PC-3 (cell line): ENCODE measurements at regions of chr20 and their contacts with region 1.

Region 1: DNA sequence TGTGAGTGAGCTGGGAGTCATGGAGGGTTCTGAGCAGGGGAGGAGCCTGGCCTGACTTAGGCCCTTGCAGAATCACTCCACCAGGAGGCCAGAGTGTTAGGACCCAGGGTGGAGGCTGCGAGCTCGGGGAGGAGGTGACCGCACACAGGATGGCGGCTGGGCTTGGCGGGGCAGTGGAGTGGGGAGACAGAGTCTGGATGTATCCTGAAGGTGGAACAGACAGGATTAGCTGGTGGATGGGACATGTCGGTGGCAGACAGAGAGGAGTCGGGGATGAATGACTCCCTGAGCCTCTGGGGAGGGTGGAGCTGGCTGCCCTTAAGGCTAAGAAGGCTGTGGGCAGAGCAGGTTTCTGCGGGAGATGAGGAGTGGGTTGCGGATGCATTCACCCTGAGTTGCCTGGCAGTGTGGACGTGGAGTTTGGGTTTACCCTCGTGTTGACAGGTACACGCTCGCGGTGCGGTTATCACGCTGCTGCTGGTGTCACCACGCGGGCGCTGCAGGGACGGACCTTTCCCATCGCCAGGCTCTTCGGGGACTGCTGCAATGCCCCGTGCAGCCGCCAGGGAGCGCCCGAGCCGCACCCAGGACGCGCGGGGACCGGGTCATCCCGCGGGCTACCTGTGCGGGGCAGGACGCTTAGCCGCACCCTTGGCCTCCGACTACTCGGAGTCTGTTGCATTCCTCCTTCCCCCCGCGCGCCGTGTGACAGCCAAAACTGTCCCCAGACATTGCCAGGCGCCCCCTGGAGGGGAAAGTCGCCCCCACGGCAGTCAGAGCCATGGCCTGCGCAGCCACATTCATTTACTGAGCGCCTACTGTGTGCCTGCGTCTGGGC is 43.0 kb upstream of the PTGIS start:
- DNase-seq: peak; percentile 93
- ATAC-seq: peak; percentile 70
- H3K4me3 ChIP-seq: peak overlapping the region; percentile 58
- H3K27ac ChIP-seq: no peak overlapping the region
- H3K4me1 ChIP-seq: peaks cover 18% of the 10 kb centered on the region
- H3K27me3 ChIP-seq: no peaks in the 10 kb centered on the region
- CTCF ChIP-seq: peak; percentile 98

Region 2: GRCh38 chr20:49063279-49063678 is 547.6 kb before region 1 on chr20:
- CTCF ChIA-PET with region 1: interaction called, 13 read pairs
- POLR2A ChIA-PET with region 1: no interaction called
- intact Hi-C with region 1: no loop called
- DNase-seq: no peak
- ATAC-seq: no peak
- H3K4me3 ChIP-seq: no peak overlapping the region
- H3K27ac ChIP-seq: no peak overlapping the region
- H3K4me1 ChIP-seq: no peaks in the 10 kb centered on the region
- H3K27me3 ChIP-seq: no peaks in the 10 kb centered on the region
- CTCF ChIP-seq: no peak

Region 3: DNA sequence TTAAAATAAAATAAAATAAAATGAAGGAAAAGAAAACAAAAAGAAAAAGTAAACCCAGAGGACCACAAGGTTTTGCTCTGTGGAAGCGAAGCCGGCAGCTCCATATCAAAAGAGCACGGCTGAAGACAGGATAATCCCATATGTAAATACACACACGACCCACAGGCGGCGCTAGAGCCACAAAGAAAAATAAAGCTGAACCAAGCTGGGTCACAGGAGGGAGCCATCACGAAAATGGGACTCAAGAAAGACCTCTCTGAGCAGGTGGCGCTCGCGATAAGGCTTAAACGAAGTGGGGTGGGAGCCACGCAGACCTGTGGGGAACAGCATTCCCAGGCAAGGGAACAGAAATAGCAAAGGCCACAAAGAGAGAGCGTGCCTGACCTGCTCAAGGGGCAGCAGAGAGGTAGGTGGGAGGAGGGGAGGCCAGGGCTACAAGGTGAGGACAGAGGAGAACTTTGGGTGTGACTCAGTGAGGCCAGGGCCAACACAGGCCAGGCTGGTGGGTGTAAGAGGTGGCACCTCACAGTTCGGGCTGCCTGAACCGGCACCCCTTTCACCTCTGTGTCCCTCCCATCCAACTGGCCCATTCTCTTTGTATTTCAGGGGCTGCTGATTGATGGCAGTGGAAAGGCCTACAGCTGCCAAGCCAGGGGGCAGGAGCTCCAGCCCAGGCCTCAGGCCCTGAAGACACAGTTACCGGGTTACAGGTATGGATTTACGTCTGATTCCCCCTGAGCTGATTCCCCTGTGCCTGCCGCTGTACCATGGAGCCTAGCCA is 69.0 kb before region 1 on chr20:
- CTCF ChIA-PET with region 1: interaction called, 64 read pairs
- POLR2A ChIA-PET with region 1: no interaction called
- intact Hi-C with region 1: loop called (anchors 1 kb)
- DNase-seq: peak; percentile 92
- ATAC-seq: peak; percentile 89
- H3K4me3 ChIP-seq: no peak overlapping the region
- H3K27ac ChIP-seq: no peak overlapping the region
- H3K4me1 ChIP-seq: no peaks in the 10 kb centered on the region
- H3K27me3 ChIP-seq: no peaks in the 10 kb centered on the region
- CTCF ChIP-seq: peak; percentile 99

Region 4: DNA sequence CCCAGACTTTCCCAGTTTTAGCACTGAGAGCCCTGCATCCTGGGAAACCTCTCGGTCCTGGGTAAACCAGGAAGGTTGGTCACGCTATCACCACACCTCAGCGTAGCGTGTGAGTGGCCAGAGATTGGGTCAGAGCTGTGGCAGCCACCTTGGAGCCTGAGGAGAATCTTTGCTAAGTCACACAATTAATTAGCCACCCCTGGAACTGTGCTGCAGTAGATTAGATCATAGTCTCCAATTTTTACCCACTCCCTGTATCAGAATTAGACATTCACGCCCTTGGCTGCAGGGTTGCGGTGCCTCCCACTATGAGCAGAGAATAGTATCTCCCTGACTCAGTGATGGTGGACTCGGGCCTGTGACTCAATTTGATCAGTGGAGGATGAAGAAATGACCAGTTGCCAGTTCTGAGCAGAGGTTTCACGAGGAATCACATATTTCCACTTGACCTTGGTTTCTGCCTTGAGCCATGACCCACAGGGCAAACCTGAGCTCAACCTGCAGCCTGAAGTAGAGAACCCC is 37.0 kb before region 1 on chr20:
- CTCF ChIA-PET with region 1: no interaction called
- POLR2A ChIA-PET with region 1: no interaction called
- intact Hi-C with region 1: no loop called
- DNase-seq: no peak
- ATAC-seq: no peak
- H3K4me3 ChIP-seq: no peak overlapping the region
- H3K27ac ChIP-seq: no peak overlapping the region
- H3K4me1 ChIP-seq: no peaks in the 10 kb centered on the region
- H3K27me3 ChIP-seq: peaks cover 14% of the 10 kb centered on the region; the same call in 1 of the 2 replicates
- CTCF ChIP-seq: no peak

Region 5: GRCh38 chr20:49676581-49677291 is 65.8 kb after region 1 on chr20:
- CTCF ChIA-PET with region 1: interaction called, 5 read pairs
- POLR2A ChIA-PET with region 1: no interaction called
- intact Hi-C with region 1: loop called (anchors 2 kb)
- DNase-seq: peak; percentile 94
- ATAC-seq: peak; percentile 66
- H3K4me3 ChIP-seq: peak overlapping the region; percentile 52
- H3K27ac ChIP-seq: peak overlapping the region; percentile 91
- H3K4me1 ChIP-seq: peaks cover 68% of the 10 kb centered on the region
- H3K27me3 ChIP-seq: no peaks in the 10 kb centered on the region
- CTCF ChIP-seq: no peak

Region 6: DNA sequence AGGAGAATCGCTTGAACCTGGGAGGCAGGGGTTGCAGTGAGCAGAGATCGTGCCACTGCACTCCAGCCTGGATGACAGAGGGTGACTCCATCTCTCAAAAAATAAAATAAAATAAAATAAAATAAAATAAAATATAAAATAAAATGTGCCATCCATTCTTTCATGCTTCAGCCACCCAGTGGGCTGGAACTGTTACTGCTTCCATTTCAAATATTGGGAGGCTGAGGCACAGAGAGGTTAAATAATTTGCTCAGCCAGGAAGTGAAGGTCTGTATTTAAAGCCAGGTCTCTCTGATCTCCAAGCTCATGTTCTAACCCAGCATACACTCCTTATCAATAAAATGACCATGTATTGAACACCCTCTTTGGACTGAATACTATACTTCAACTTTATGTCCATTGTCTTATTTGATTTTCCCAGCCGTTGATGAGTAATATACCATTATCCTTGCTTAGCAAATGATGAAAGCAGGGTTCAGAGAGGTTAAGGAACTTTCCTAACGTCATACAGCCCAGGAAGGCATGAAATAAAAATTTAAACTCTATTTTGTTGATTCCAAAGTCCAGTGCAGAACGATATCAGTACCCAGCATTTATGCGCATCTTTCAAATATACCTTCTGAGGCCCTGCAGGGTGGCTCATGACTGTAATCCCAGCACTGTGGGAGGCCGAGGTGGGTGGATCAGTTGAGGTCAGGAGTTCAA is 175.9 kb after region 1 on chr20:
- CTCF ChIA-PET with region 1: no interaction called
- POLR2A ChIA-PET with region 1: no interaction called
- intact Hi-C with region 1: loop called (anchors 1 kb)
- DNase-seq: peak; percentile 63
- ATAC-seq: peak; percentile 57; the same call in 1 of the 2 replicates
- H3K4me3 ChIP-seq: no peak overlapping the region
- H3K27ac ChIP-seq: no peak overlapping the region
- H3K4me1 ChIP-seq: no peaks in the 10 kb centered on the region
- H3K27me3 ChIP-seq: no peaks in the 10 kb centered on the region
- CTCF ChIP-seq: peak; percentile 52

Region 7: DNA sequence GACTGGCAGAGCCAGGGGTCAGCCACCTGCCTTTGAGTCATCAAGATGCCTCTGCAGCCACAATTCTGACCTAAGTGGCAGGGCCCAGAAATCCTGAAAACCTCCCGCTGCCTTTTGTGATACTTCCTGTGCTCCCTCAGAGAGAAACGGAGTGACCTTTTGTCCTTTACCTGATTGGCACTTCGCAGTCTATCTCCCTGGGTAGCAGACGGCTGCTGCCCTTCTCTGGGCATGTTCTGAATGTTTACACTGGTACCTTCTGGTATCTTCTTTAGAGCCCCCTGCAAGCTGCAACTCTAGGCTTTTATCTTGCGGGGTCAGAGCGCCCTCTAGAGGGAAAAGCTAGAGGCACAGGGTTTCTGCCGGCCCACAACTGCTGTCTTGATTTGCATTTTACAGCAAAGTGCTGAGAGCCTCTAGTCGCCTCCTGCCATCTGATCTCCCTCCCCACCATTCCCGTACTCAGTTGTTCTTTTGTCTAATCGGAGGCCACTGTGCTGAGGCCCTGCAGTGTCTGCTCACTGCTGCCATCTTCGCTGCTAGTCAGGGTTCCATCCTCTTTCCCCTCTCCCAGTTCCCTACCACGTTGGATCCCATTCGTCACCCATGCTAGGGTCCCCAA is 277.5 kb after region 1 on chr20:
- CTCF ChIA-PET with region 1: interaction called, 6 read pairs
- POLR2A ChIA-PET with region 1: no interaction called
- intact Hi-C with region 1: loop called (anchors 2 kb)
- DNase-seq: peak; percentile 78
- ATAC-seq: peak; percentile 77
- H3K4me3 ChIP-seq: no peak overlapping the region
- H3K27ac ChIP-seq: no peak overlapping the region
- H3K4me1 ChIP-seq: 0 out of 2 replicates have a peak, but pooled peaks cover 5% of the 10 kb centered on the region
- H3K27me3 ChIP-seq: no peaks in the 10 kb centered on the region
- CTCF ChIP-seq: peak; percentile 98